ENCODE measurements at regions of chr20 and their contacts with region 1.

Region 1: DNA sequence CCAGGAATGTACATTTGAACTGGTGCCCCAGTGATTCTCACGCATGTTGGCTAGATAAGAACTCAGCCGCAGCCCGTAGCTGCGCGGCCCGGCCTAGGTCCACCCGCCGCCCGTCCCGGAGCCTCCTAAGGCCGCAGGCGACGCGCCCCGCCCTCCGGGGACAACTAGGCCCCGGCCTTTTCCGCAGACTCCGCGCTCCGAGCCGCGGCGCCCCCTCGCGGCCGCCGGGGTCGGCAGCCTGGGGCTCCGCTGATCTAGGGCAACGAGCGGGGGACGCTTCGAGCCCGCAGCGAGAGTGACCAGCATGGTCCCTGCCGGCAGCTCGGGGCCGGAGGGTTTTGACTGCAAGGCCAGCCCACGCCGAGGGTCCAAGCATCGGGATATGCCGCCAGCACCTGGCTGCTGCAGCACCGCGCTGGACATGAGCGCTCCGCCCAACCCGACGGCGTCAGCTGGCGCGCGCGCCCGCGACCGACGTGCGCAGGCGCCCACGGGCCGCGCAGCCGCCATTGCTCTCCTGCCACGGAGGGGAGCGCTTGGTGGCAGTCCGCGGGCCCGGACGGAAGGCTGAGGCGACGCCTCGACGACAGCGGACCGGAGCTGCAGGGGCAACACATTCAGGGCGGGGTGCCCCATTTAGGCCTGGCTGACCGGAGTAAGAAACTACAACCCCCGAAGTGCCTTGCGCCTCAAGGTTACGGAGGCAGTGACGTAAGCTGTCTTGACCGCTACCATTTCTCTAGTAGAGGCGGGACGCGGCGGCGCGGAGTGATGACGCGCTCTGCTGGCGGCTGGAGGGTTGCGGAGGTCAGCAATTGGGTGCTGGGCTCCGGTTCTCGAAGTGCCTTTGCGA is at the start of gene AP5S1:
- DNase-seq: peak; percentile 97 to 99 (median 99)
- ATAC-seq: peak; percentile 94
- H3K4me3 ChIP-seq: peak within 1 kb of the TSS; percentile 47
- H3K27ac ChIP-seq: peak within 1 kb of the TSS; percentile 99
- H3K4me1 ChIP-seq: peaks cover 14% of the 10 kb centered on the region
- H3K27me3 ChIP-seq: no peaks in the 10 kb centered on the region
- total RNA-seq, gene AP5S1: 12.3 to 17.2 (median 13.5) TPM

Region 2: DNA sequence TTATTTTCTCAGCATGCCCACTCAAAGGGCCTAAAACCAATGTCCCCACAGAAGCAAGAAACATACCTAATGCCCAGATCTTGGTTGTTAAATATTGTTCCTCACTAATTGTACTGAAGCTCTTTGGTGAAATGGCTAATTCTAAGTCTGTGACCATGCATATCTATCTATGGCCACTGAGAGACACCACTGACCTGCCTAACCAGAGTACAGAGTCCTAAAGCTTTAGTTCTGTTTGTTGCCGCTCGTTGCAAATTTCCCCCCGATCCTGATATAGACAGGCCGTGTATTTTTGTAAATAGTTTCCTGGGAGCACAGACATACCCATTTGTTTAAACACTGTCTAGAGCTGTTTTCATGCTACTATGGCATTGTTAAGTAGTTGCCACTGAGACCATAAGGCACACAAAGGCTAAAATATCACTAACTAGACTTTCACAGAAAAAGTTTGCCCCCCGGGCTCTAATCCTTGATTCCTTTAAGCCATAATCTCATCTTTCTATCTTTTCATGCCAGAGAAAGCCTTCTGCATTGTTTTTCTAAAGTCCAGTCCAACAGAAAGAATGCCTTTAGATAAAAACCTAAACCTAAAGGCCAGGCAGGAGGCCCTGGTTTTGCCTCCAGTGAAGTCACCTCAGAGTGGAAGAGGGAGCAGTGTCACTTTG is 461.5 kb before region 1 on chr20:
- intact Hi-C with region 1: no loop called
- DNase-seq: no peak
- ATAC-seq: no peak
- H3K4me3 ChIP-seq: no peak overlapping the region
- H3K27ac ChIP-seq: no peak overlapping the region
- H3K4me1 ChIP-seq: no peaks in the 10 kb centered on the region
- H3K27me3 ChIP-seq: no peaks in the 10 kb centered on the region

Region 3: DNA sequence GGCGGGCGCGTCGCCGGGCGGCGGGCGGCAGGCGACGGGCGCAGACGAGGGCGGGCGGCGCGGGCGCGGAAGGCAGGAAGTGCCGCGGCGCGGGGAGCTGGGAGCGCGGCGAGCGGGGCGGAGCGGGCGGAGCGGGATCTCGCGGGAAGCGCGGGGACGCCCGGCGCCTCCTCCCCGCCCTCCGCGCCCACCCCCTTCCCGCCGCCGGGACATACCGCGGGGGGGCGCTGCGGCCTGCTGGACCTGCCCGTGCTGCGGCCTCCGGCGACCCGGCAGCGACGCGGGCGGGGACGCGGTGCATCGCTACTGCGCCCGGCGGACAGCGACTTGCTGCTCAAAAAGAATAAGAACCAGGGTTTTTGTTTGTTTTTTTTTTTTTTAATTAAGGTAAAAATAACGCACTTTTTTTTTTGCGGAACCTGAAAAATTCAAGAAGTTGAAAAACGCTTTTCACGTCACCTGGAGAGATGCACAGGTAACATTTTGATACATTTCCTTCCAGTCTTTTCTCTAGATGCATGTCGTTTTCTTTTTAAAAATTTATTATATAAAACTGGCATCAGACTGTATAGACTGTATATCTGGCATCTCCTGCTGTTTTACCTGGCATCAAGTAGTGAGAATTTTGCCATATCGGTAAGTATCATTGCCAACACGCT is 33.5 kb before region 1 on chr20 and contains the start of gene CENPB:
- intact Hi-C with region 1: loop called in 3 of 4 experiments (anchors 2 to 5 kb)
- DNase-seq: peak; percentile 89 to 97 (median 97)
- ATAC-seq: peak; percentile 91 to 92
- H3K4me3 ChIP-seq: peak within 1 kb of the TSS; percentile 87
- H3K27ac ChIP-seq: peak within 1 kb of the TSS; percentile 65
- H3K4me1 ChIP-seq: peaks cover 11% of the 10 kb centered on the region
- H3K27me3 ChIP-seq: no peaks in the 10 kb centered on the region
- total RNA-seq, gene CENPB: 63.9 to 92.7 (median 72.1) TPM